HCT116 (cell line): ENCODE measurements at regions of chr6 and their contacts with region 1.

Region 1: GRCh38 chr6:34610819-34611477 is 54.8 kb upstream of the SPDEF start:
- DNase-seq: peak; percentile 64
- ATAC-seq: peak; percentile 67
- H3K4me3 ChIP-seq: no peak overlapping the region
- H3K27ac ChIP-seq: no peak overlapping the region; the same call in 1 of the 2 replicates
- H3K4me1 ChIP-seq: peaks cover 27 to 41% of the 10 kb centered on the region in 2 experiments
- H3K27me3 ChIP-seq: no peaks in the 10 kb centered on the region
- CTCF ChIP-seq: no peak
- POLR2A ChIP-seq: no peak
- RAD21 ChIP-seq: 0 out of 2 replicates have a peak, but pooled peaks have one; percentile 3

Region 2: GRCh38 chr6:34161857-34162515 is 449.0 kb before region 1 on chr6:
- CTCF ChIA-PET with region 1: interaction called, 14 read pairs
- POLR2A ChIA-PET with region 1: no interaction called
- RAD21 ChIA-PET with region 1: interaction called, 3 to 7 read pairs
- intact Hi-C with region 1: loop called (anchors 2 kb)
- DNase-seq: no peak
- ATAC-seq: no peak
- H3K4me3 ChIP-seq: no peak overlapping the region
- H3K27ac ChIP-seq: no peak overlapping the region
- H3K4me1 ChIP-seq: peaks cover 0 to 4% of the 10 kb centered on the region in 2 experiments; a peak in 2 of 4 replicates
- H3K27me3 ChIP-seq: no peaks in the 10 kb centered on the region
- CTCF ChIP-seq: no peak
- POLR2A ChIP-seq: no peak
- RAD21 ChIP-seq: no peak

Region 3: DNA sequence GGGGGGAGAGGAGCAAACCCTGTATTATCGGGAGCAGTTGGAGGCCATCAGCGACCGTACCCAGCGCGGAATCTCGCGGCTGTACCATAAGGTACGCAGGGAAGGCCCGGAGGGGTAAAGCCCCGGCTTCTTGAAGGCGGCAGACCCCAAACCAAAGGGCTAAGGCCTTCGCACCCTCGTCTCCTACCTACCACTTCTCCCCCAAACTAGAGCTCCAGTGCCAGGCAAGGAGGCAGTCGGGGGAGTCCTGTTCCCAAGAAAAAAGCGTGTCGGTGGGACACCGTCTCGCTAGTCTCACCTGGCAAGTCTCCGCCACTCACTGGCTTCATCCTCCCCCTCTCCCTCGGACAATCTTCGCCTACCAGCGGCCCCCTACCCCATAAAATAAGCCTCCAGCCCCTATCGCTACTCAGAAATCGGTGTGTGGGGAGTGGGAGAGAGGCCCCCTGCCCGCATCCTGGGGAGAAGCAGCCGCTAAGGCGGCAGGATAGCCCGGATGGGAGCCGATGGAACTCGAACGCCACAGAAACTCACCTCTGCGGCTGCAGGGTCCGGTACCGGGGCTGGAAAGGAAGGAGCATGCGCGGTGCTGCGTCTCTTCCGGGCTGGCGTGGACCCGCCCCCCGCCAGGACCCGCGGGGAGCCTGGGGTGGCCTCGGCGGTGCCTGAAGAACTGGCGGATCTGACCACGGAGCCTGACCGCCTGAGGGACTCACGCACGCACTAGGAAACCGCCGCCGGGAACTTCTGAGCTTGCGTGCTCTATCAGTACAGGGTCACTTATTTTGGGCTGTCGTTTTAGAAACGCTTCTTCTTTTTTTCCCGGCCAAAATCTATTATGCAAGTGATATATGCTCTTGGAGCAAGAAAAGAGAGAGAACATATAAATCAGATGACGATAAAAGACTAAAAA is 185.2 kb before region 1 on chr6 and contains the start of gene RPS10:
- CTCF ChIA-PET with region 1: interaction called, 3 read pairs
- POLR2A ChIA-PET with region 1: interaction called, 5 read pairs
- RAD21 ChIA-PET with region 1: no interaction called
- intact Hi-C with region 1: loop called (anchors 1 kb)
- DNase-seq: peak; percentile 88
- ATAC-seq: peak; percentile 90
- H3K4me3 ChIP-seq: peak within 1 kb of the TSS; percentile 75 to 98
- H3K27ac ChIP-seq: peak within 1 kb of the TSS; percentile 85
- H3K4me1 ChIP-seq: peaks cover 0 to 21% of the 10 kb centered on the region in 2 experiments; a peak in 3 of 4 replicates
- H3K27me3 ChIP-seq: no peaks in the 10 kb centered on the region
- CTCF ChIP-seq: no peak
- POLR2A ChIP-seq: peak; percentile 79
- RAD21 ChIP-seq: 0 out of 2 replicates have a peak, but pooled peaks have one; percentile 5
- total RNA-seq, gene RPS10: 1,863 TPM

Region 4: GRCh38 chr6:34459899-34460593 is 150.9 kb before region 1 on chr6:
- CTCF ChIA-PET with region 1: interaction called, 105 read pairs
- POLR2A ChIA-PET with region 1: interaction called, 15 read pairs
- RAD21 ChIA-PET with region 1: interaction called, 13 to 17 read pairs
- intact Hi-C with region 1: loop called (anchors 1 kb)
- DNase-seq: peak; percentile 70
- ATAC-seq: peak; percentile 56
- H3K4me3 ChIP-seq: no peak overlapping the region
- H3K27ac ChIP-seq: no peak overlapping the region
- H3K4me1 ChIP-seq: peaks cover 8 to 35% of the 10 kb centered on the region in 2 experiments
- H3K27me3 ChIP-seq: no peaks in the 10 kb centered on the region
- CTCF ChIP-seq: peak; percentile 68 to 85 (median 85)
- POLR2A ChIP-seq: no peak
- RAD21 ChIP-seq: peak; percentile 97

Region 5: GRCh38 chr6:34526992-34527728 is 83.8 kb before region 1 on chr6:
- CTCF ChIA-PET with region 1: interaction called, 7 read pairs
- POLR2A ChIA-PET with region 1: interaction called, 3 read pairs
- RAD21 ChIA-PET with region 1: interaction called in 1 of 2 experiments, 3 read pairs
- intact Hi-C with region 1: loop called (anchors 1 kb)
- DNase-seq: peak; percentile 86
- ATAC-seq: peak; percentile 95
- H3K4me3 ChIP-seq: peak overlapping the region; percentile 27 to 44
- H3K27ac ChIP-seq: no peak overlapping the region
- H3K4me1 ChIP-seq: peaks cover 10 to 14% of the 10 kb centered on the region in 2 experiments; a peak in 3 of 4 replicates
- H3K27me3 ChIP-seq: no peaks in the 10 kb centered on the region
- CTCF ChIP-seq: peak; percentile 41 to 66 (median 55); a peak in 5 of 6 replicates
- POLR2A ChIP-seq: no peak
- RAD21 ChIP-seq: peak; percentile 70